Caco-2 (cell line): ENCODE measurements at regions of chr5 and their contacts with region 1.

Region 1: GRCh38 chr5:145681686-145682085 is 153.5 kb downstream of the PRELID2 start:
- DNase-seq: peak; percentile 75 to 80
- H3K4me3 ChIP-seq: no peak overlapping the region
- H3K4me3 Mint-ChIP-seq: no peak overlapping the region
- H3K27ac Mint-ChIP-seq: no peak overlapping the region
- H3K4me1 ChIP-seq: peaks cover 24% of the 10 kb centered on the region
- H3K4me1 Mint-ChIP-seq: peaks cover 31% of the 10 kb centered on the region
- H3K27me3 ChIP-seq: no peaks in the 10 kb centered on the region
- H3K27me3 Mint-ChIP-seq: no peaks in the 10 kb centered on the region
- CTCF ChIP-seq: peak; percentile 80 to 91

Region 2: DNA sequence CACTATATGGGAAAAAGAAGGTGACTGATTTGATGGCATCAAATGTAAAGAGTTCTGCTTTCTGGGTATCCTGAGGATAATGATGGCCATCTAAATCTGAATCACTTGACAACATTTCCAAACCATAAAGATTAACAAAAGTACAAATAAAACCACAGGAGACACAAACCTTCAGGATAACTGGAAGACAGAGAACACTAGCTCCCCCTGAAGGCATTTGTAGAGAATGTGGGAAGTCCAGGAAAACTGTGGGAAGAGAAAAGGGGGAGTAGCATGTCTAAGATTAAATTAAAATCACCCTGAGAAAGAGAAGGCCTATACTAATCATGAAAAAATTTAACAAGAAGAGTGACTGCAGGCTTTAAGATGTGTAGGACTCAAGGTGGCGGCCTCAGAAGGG is 37.3 kb after region 1 on chr5:
- CTCF ChIA-PET with region 1: interaction called, 3 read pairs
- POLR2A ChIA-PET with region 1: no interaction called
- intact Hi-C with region 1: loop called (anchors 1 kb)
- DNase-seq: peak in 1 of 2 experiments; percentile 22
- H3K4me3 ChIP-seq: no peak overlapping the region
- H3K4me3 Mint-ChIP-seq: no peak overlapping the region
- H3K27ac Mint-ChIP-seq: no peak overlapping the region
- H3K4me1 ChIP-seq: no peaks in the 10 kb centered on the region
- H3K4me1 Mint-ChIP-seq: no peaks in the 10 kb centered on the region
- H3K27me3 ChIP-seq: no peaks in the 10 kb centered on the region
- H3K27me3 Mint-ChIP-seq: no peaks in the 10 kb centered on the region
- CTCF ChIP-seq: peak; percentile 48 to 51

Region 3: DNA sequence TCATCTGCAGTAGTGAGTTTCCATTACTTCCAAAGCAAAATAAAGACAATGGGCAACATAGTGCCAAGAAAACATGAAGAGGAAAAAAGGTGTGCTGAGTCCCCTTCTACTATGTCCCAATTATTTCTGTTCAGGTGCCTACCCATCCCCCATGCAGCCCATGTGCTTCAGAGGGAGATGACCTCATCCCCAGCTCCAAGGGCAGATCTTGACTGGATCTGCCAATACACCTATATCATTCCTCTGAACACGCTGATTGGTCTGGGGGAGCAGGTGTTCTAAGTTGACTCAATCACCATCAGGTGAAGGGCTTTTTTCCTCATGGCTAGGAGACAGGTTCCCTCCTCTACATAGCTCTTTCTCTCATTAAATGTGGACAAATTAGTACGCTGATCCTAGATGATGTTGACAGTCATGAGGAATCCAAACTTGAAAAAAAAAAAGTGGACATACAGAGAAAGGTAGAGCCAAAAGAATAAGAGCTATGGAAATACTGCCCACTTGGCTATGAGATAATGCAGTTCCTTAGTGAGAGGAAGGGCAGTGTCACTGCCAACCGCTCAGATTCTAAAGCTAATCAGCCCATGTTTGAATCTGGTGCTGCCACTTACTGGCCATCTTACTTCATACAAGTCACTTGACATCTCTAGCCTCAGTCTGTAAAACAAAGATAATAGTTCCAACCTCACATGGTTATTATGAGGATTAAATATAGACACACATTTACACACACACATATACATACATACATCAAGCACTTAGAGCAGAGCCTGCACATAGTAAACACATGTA is 130.3 kb after region 1 on chr5:
- CTCF ChIA-PET with region 1: interaction called, 3 read pairs
- POLR2A ChIA-PET with region 1: no interaction called
- intact Hi-C with region 1: loop called (anchors 1 kb)
- DNase-seq: peak in 1 of 2 experiments; percentile 14
- H3K4me3 ChIP-seq: no peak overlapping the region
- H3K4me3 Mint-ChIP-seq: no peak overlapping the region
- H3K27ac Mint-ChIP-seq: no peak overlapping the region
- H3K4me1 ChIP-seq: no peaks in the 10 kb centered on the region
- H3K4me1 Mint-ChIP-seq: no peaks in the 10 kb centered on the region
- H3K27me3 ChIP-seq: no peaks in the 10 kb centered on the region
- H3K27me3 Mint-ChIP-seq: no peaks in the 10 kb centered on the region
- CTCF ChIP-seq: no peak

Region 4: DNA sequence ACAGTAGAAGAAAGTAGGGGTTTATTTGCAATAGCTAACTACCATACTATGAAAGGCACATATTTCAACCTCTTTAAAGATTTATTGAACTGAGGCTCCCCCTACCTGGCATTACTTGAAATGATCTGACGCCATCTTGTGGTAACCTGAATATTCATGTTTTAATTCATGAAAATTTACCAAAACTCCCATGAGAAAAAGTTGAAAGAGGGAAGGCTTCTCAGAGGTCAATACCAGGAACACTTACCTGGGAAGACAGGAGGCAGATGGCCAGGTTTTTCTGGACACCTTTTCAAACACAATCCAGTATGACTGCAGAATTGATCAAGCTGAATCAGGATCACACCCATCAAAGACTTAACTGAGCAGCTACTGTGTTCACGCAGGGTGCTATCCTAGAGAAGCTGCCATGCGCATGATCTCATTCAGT is 144.1 kb after region 1 on chr5:
- CTCF ChIA-PET with region 1: interaction called, 7 read pairs
- POLR2A ChIA-PET with region 1: no interaction called
- intact Hi-C with region 1: loop called (anchors 1 kb)
- DNase-seq: peak in 1 of 2 experiments; percentile 45
- H3K4me3 ChIP-seq: no peak overlapping the region
- H3K4me3 Mint-ChIP-seq: no peak overlapping the region
- H3K27ac Mint-ChIP-seq: no peak overlapping the region
- H3K4me1 ChIP-seq: no peaks in the 10 kb centered on the region
- H3K4me1 Mint-ChIP-seq: peaks cover 16% of the 10 kb centered on the region
- H3K27me3 ChIP-seq: no peaks in the 10 kb centered on the region
- H3K27me3 Mint-ChIP-seq: no peaks in the 10 kb centered on the region
- CTCF ChIP-seq: peak; percentile 77 to 94